ENCODE measurements at regions of chr16 and their contacts with region 1.

Region 1: GRCh38 chr16:81006814-81007696 is at the starts of genes CENPN and CMC2:
- DNase-seq: peak; percentile 98
- H3K4me3 ChIP-seq: peak within 1 kb of the TSS; percentile 86 to 95 (median 93)
- H3K27ac ChIP-seq: peak within 1 kb of the TSS; percentile 97
- H3K4me1 ChIP-seq: peaks cover 9% of the 10 kb centered on the region
- H3K27me3 ChIP-seq: no peaks in the 10 kb centered on the region
- CTCF ChIP-seq: peak in 1 of 2 donors; percentile 29
- total RNA-seq, gene CENPN: 15.2 to 32.5 TPM
- total RNA-seq, gene CMC2: 30.5 to 73.1 TPM

Region 2: GRCh38 chr16:81737885-81738786 is 731.1 kb after region 1 on chr16:
- CTCF ChIA-PET with region 1: no interaction called
- dilution Hi-C with region 1: no loop called
- in situ Hi-C with region 1: no loop called
- intact Hi-C with region 1: loop called (anchors 1 kb)
- DNase-seq: peak; percentile 88
- H3K4me3 ChIP-seq: peak overlapping the region in 1 of 3 experiments; percentile 18
- H3K27ac ChIP-seq: no peak overlapping the region
- H3K4me1 ChIP-seq: peaks cover 3% of the 10 kb centered on the region
- H3K27me3 ChIP-seq: no peaks in the 10 kb centered on the region
- CTCF ChIP-seq: peak; percentile 81 to 83